Astrocyte of the cerebellum (primary cell): ENCODE measurements at regions of chr4 and their contacts with region 1.

Region 1: GRCh38 chr4:48815478-48815877 is 15.4 kb upstream of the OCIAD1 start:
- DNase-seq: no peak
- H3K4me3 ChIP-seq: no peak overlapping the region
- CTCF ChIP-seq: no peak

Region 2: DNA sequence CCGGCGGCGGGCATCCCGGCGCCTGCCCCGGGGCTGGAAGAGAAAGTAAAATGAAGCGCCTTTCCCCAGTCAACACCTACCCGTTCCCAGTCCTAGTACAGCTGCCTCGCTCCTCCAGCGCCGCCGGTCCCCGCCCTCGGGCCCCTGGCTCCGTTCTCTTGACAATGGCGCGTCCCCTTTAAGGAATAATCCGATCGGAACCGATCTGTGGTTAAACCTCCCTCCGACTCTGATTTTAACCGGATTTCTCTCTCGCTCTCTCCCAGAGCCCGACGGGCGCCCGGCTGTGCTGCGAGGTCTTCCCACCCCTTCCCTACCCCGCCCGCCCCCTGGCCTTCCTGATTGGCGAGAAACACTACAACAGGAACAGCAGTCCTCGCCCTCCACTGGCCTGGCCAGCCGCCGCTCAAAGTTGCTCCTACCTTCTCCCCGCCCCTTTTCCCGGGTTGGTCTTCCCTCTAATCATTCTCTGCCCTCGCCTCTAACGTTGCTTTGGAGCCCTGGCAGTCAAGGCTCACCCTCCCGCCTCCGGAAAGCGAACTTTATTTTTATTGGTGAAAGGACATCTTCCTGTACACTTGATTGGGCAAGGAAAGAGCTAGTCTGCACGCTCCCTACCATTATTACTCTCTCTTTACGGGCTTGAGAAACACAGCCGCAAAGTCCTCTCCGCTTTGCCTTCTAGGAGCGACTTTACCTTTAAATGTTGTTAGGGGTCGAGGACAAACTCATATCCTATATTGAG is 35.3 kb before region 1 on chr4 and contains the start of gene FRYL:
- in situ Hi-C with region 1: loop called (anchors 5 kb)
- DNase-seq: peak; percentile 99
- H3K4me3 ChIP-seq: peak within 1 kb of the TSS; percentile 83
- CTCF ChIP-seq: no peak